Sigmoid colon (tissue), 7 donors: ENCODE measurements at regions of chr3 and their contacts with region 1.

Region 1: GRCh38 chr3:143972505-143973255 is 1.1 kb downstream of the DIPK2A start:
- DNase-seq: peak; percentile 88
- H3K4me3 ChIP-seq: peak overlapping the region; percentile 70 to 91 (median 84)
- H3K27ac ChIP-seq: peak overlapping the region; percentile 95 to 99 (median 98)
- H3K4me1 ChIP-seq: peaks cover 0 to 45% (median 23%) of the 10 kb centered on the region in 4 donors
- H3K27me3 ChIP-seq: no peaks in the 10 kb centered on the region
- CTCF ChIP-seq: peak in 3 of 4 experiments; percentile 21 to 47 (median 42)
- EP300 ChIP-seq: peak in 1 of 4 donors; percentile 3
- POLR2A ChIP-seq: no peak

Region 2: DNA sequence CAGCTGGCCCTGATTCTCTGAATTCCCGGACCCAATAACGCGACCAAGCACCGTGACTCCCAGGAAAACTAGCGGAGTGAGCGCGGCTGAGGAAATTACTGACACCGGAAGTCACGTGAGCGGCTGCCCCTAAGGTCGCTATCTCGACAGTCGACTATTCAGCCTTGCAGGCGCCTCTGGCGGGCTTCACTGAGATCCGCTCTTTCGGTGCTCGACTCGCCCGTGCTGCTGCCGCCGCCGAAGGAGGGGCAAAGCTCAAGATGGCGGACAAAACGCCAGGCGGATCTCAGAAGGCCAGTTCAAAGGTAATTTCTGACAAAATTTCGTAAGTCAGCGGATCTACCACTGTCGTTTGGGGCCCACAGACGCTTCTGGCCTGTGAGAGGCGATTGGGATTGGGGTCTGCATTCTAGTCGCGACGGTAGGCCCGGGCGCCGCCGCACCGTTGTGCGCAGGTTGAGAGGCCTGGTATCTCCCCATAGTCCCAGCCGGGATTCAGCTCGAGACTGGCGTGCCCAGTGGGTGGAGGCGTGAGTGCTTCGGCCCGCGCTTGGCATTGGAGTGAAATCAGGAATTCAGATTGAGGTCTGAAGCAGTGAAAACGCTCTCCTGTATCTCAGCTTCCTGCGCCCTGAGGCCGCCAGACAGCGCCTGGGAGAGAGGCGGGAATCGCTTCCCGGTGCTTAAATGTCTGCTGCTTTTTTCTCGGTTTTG is 971.2 kb before region 1 on chr3 and contains the start of gene U2SURP:
- intact Hi-C with region 1: loop called (anchors 5 kb)
- DNase-seq: peak; percentile 98
- H3K4me3 ChIP-seq: peak within 1 kb of the TSS; percentile 64 to 95 (median 94)
- H3K27ac ChIP-seq: peak within 1 kb of the TSS; percentile 91 to 95 (median 92)
- H3K4me1 ChIP-seq: peaks cover 0 to 49% (median 35%) of the 10 kb centered on the region in 4 donors
- H3K27me3 ChIP-seq: no peaks in the 10 kb centered on the region
- CTCF ChIP-seq: no peak
- EP300 ChIP-seq: peak in 2 of 4 donors; percentile 13 to 78
- POLR2A ChIP-seq: peak in 1 of 2 donors; percentile 26
- total RNA-seq, gene U2SURP: 66.8 to 79.8 (median 68.0) TPM

Region 3: DNA sequence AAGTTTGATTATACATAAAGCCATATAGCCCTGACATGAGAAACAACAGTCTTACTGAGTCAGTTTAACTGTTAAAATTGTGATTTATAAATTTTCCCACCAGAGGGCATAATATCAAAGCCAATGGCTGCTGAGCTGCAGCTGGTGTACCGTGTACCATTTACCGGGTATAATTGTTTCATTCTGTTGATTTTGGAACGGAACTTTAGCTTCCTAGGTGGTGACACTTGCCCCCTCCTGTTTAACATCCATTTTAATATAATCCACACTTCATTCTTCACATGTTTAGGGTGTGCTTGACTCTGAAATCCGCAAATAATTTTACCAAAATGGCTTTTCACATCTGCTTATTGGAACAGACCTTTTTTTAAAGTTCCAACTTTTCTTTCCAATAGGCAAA is 197.2 kb before region 1 on chr3:
- intact Hi-C with region 1: loop called (anchors 5 kb)
- DNase-seq: no peak
- H3K4me3 ChIP-seq: peak overlapping the region in 2 of 4 donors; percentile 22 to 23
- H3K27ac ChIP-seq: no peak overlapping the region
- H3K4me1 ChIP-seq: peaks cover 0 to 12% (median 8%) of the 10 kb centered on the region in 4 donors
- H3K27me3 ChIP-seq: no peaks in the 10 kb centered on the region
- CTCF ChIP-seq: peak in 3 of 4 experiments; percentile 32 to 56 (median 32)
- EP300 ChIP-seq: no peak
- POLR2A ChIP-seq: no peak

Region 4: GRCh38 chr3:143875546-143875945 is 97.1 kb before region 1 on chr3:
- intact Hi-C with region 1: no loop called
- DNase-seq: no peak
- H3K4me3 ChIP-seq: no peak overlapping the region
- H3K27ac ChIP-seq: no peak overlapping the region
- H3K4me1 ChIP-seq: no peaks in the 10 kb centered on the region
- H3K27me3 ChIP-seq: no peaks in the 10 kb centered on the region
- CTCF ChIP-seq: no peak
- EP300 ChIP-seq: no peak
- POLR2A ChIP-seq: no peak

Region 5: DNA sequence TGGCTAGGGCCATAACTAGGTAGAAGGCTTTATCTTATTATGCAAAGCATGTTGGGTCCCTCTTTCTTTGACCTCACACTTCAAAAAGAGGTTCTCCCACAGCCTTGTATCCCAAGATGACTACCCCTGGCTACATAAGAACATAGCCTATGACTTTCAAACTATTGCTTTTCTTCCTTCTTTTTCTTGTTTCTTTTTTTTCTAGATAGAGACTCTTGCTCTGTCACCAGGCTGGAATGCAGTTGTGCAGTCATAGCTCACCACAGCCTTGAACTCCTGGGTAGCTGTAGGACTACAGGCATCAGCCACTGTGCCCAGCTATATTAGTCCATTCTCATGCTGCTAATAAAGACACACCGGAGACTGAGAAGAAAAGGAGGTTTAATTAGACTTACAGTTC is 46.1 kb after region 1 on chr3:
- intact Hi-C with region 1: no loop called
- DNase-seq: no peak
- H3K4me3 ChIP-seq: no peak overlapping the region
- H3K27ac ChIP-seq: no peak overlapping the region
- H3K4me1 ChIP-seq: no peaks in the 10 kb centered on the region
- H3K27me3 ChIP-seq: no peaks in the 10 kb centered on the region
- CTCF ChIP-seq: no peak
- EP300 ChIP-seq: no peak
- POLR2A ChIP-seq: no peak

Region 6: GRCh38 chr3:144770915-144771351 is 798.3 kb after region 1 on chr3:
- intact Hi-C with region 1: loop called (anchors 5 kb)
- DNase-seq: no peak
- H3K4me3 ChIP-seq: no peak overlapping the region
- H3K27ac ChIP-seq: no peak overlapping the region
- H3K4me1 ChIP-seq: no peaks in the 10 kb centered on the region
- H3K27me3 ChIP-seq: no peaks in the 10 kb centered on the region
- CTCF ChIP-seq: peak in 2 of 4 experiments; percentile 11 to 28
- EP300 ChIP-seq: no peak
- POLR2A ChIP-seq: no peak